Calu3 (cell line): ENCODE measurements at regions of chr10 and their contacts with region 1.

Region 1: GRCh38 chr10:3293581-3294431 is 121.2 kb upstream of the PITRM1 start:
- DNase-seq: no peak
- H3K4me3 Mint-ChIP-seq: no peak overlapping the region
- H3K27ac Mint-ChIP-seq: no peak overlapping the region
- H3K4me1 Mint-ChIP-seq: no peaks in the 10 kb centered on the region
- H3K27me3 Mint-ChIP-seq: peaks cover 73% of the 10 kb centered on the region
- CTCF ChIP-seq: no peak

Region 2: GRCh38 chr10:3323865-3324498 is 30.2 kb after region 1 on chr10:
- CTCF ChIA-PET with region 1: no interaction called
- intact Hi-C with region 1: no loop called
- DNase-seq: no peak
- H3K4me3 Mint-ChIP-seq: no peak overlapping the region
- H3K27ac Mint-ChIP-seq: no peak overlapping the region
- H3K4me1 Mint-ChIP-seq: peaks cover 8% of the 10 kb centered on the region
- H3K27me3 Mint-ChIP-seq: no peaks in the 10 kb centered on the region
- CTCF ChIP-seq: no peak

Region 3: GRCh38 chr10:4488904-4489303 is 1195.1 kb after region 1 on chr10:
- CTCF ChIA-PET with region 1: interaction called, 10 read pairs
- intact Hi-C with region 1: no loop called
- DNase-seq: no peak
- H3K4me3 Mint-ChIP-seq: no peak overlapping the region
- H3K27ac Mint-ChIP-seq: no peak overlapping the region
- H3K4me1 Mint-ChIP-seq: no peaks in the 10 kb centered on the region
- H3K27me3 Mint-ChIP-seq: peaks cover 8% of the 10 kb centered on the region
- CTCF ChIP-seq: no peak